Sigmoid colon (tissue), 7 donors: ENCODE measurements at regions of chr9 and their contacts with region 1.

Region 1: DNA sequence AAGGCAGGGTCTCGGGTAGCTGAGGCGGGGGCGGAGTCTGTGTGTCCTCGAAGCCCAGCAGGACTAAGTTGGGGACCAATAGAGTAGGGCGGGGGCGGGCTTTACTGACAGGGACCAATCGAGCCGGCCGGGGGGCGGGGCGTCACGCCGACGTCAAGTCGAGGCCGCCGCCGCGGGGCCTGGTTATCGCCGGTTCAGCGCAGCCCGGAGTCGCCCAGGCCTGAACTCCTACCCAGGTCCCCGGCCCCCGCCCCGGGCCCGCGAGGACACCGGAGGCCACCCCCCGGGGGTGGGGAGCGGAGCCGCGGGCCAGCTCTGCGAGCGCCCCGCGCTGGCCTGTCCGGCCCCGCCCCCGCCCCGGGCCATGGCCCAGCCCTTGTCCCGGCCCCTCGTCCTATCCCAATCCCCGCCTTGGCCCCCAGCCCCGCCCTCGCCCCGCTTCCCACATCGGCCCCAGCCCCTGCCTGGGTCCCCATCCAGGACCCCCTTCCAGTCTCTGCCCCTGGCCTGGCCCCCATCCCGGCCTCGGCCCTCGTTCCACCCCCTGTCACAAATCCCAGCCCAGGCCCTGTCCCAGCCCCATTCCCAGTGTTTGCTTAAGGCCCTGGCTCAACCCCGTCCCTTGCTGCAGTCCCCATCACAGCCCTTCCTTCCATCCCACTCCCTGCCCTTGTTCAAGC is at the start of gene TMEM8B:
- DNase-seq: peak; percentile 99
- H3K4me3 ChIP-seq: peak within 1 kb of the TSS; percentile 52 to 95 (median 91)
- H3K27ac ChIP-seq: peak within 1 kb of the TSS; percentile 93 to 99 (median 98)
- H3K4me1 ChIP-seq: peaks cover 0 to 44% (median 34%) of the 10 kb centered on the region in 4 donors
- H3K27me3 ChIP-seq: no peaks in the 10 kb centered on the region
- CTCF ChIP-seq: no peak
- EP300 ChIP-seq: no peak
- POLR2A ChIP-seq: peak in 1 of 2 donors; percentile 21
- total RNA-seq, gene TMEM8B: 6.4 to 12.5 (median 8.4) TPM

Region 2: GRCh38 chr9:35569206-35569605 is 260.0 kb before region 1 on chr9:
- intact Hi-C with region 1: no loop called
- DNase-seq: no peak
- H3K4me3 ChIP-seq: no peak overlapping the region
- H3K27ac ChIP-seq: no peak overlapping the region
- H3K4me1 ChIP-seq: peaks cover 0 to 6% (median 4%) of the 10 kb centered on the region in 4 donors
- H3K27me3 ChIP-seq: no peaks in the 10 kb centered on the region
- CTCF ChIP-seq: no peak
- EP300 ChIP-seq: no peak
- POLR2A ChIP-seq: no peak

Region 3: DNA sequence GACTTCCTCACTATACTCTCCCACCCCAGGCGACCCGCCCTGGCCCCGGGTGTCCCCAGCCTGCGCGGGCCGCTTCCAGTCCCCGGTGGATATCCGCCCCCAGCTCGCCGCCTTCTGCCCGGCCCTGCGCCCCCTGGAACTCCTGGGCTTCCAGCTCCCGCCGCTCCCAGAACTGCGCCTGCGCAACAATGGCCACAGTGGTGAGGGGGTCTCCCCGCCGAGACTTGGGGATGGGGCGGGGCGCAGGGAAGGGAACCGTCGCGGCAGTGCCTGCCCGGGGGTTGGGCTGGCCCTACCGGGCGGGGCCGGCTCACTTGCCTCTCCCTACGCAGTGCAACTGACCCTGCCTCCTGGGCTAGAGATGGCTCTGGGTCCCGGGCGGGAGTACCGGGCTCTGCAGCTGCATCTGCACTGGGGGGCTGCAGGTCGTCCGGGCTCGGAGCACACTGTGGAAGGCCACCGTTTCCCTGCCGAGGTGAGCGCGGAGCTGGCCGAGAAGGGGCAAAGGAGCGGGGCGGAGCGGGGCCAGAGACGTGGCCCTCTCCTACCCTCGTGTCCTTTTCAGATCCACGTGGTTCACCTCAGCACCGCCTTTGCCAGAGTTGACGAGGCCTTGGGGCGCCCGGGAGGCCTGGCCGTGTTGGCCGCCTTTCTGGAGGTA is 153.4 kb before region 1 on chr9:
- intact Hi-C with region 1: no loop called
- DNase-seq: no peak
- H3K4me3 ChIP-seq: peak overlapping the region; percentile 37 to 56 (median 48)
- H3K27ac ChIP-seq: peak overlapping the region in 3 of 4 donors; percentile 13 to 52 (median 28)
- H3K4me1 ChIP-seq: peaks cover 0 to 28% (median 26%) of the 10 kb centered on the region in 4 donors
- H3K27me3 ChIP-seq: no peaks in the 10 kb centered on the region
- CTCF ChIP-seq: no peak
- EP300 ChIP-seq: no peak
- POLR2A ChIP-seq: no peak

Region 4: GRCh38 chr9:35814841-35815543 is 14.2 kb before region 1 on chr9 and contains the start of gene HINT2:
- intact Hi-C with region 1: loop called (anchors 2 kb)
- DNase-seq: peak; percentile 99
- H3K4me3 ChIP-seq: peak within 1 kb of the TSS; percentile 82 to 99 (median 98)
- H3K27ac ChIP-seq: peak within 1 kb of the TSS; percentile 98 to 100 (median 98)
- H3K4me1 ChIP-seq: peaks cover 0 to 36% (median 32%) of the 10 kb centered on the region in 4 donors
- H3K27me3 ChIP-seq: no peaks in the 10 kb centered on the region
- CTCF ChIP-seq: peak in 1 of 4 experiments; percentile 9
- EP300 ChIP-seq: no peak
- POLR2A ChIP-seq: peak; percentile 92 to 93
- total RNA-seq, gene HINT2: 23.5 to 42.8 (median 36.2) TPM

Region 5: GRCh38 chr9:35882263-35882848 is 53.1 kb after region 1 on chr9:
- intact Hi-C with region 1: loop called (anchors 2 kb)
- DNase-seq: peak; percentile 92
- H3K4me3 ChIP-seq: no peak overlapping the region
- H3K27ac ChIP-seq: no peak overlapping the region
- H3K4me1 ChIP-seq: no peaks in the 10 kb centered on the region
- H3K27me3 ChIP-seq: no peaks in the 10 kb centered on the region
- CTCF ChIP-seq: peak; percentile 89 to 96 (median 94)
- EP300 ChIP-seq: no peak
- POLR2A ChIP-seq: no peak